Sigmoid colon (tissue), 7 donors: ENCODE measurements at regions of chr11 and their contacts with region 1.

Region 1: GRCh38 chr11:118145285-118146227 is 7.1 kb downstream of the SCN4B start:
- DNase-seq: peak; percentile 89
- H3K4me3 ChIP-seq: peak overlapping the region; percentile 44 to 66 (median 60)
- H3K27ac ChIP-seq: peak overlapping the region in 3 of 4 donors; percentile 39 to 58 (median 51)
- H3K4me1 ChIP-seq: peaks cover 0 to 9% (median 7%) of the 10 kb centered on the region in 4 donors
- H3K27me3 ChIP-seq: peaks cover 0 to 43% (median 6%) of the 10 kb centered on the region in 3 donors
- CTCF ChIP-seq: peak; percentile 90 to 97 (median 94)
- EP300 ChIP-seq: no peak
- POLR2A ChIP-seq: no peak

Region 2: DNA sequence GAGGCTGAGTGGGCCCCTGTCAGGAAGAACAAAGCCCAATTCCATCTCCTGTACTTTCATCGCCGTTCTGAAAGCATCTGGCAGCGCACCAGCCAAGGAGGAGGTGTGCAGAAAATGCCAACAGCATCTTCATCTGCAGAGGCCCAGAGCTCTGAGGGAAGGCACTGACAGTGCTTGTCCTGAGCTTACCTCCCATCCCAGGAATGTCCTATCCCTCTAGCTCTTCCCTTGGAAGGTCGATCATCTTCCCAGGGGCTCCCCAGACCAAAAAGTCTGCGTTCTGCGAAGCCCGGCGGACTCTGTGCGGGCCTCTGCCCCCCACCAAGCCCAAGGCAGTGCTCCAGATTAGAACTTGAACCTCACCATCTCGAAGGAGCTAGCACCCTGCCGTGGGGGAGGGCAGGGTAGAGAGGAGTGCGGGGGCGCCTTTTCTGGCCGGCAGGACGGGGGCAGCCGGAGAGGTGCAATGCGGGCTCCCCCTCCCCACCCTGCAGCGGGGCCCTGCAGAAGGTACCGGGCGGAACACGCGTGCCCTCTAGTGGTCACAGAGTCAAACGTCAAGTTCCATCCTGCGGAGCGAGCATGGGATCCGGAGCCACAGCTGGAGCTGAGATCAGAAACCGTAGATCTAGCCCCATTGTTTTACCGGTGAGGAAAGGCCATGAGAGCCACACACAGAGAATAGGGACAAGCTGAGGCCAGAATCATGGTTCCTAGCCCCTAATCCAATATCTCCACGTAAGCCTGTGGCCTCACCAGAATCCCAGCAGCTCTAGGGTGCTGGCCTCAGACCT is 25.9 kb after region 1 on chr11:
- intact Hi-C with region 1: loop called (anchors 1 kb)
- DNase-seq: peak; percentile 85
- H3K4me3 ChIP-seq: no peak overlapping the region
- H3K27ac ChIP-seq: no peak overlapping the region
- H3K4me1 ChIP-seq: peaks cover 0 to 23% (median 14%) of the 10 kb centered on the region in 4 donors
- H3K27me3 ChIP-seq: peaks cover 0 to 12% (median 0%) of the 10 kb centered on the region in 3 donors
- CTCF ChIP-seq: peak; percentile 72 to 91 (median 82)
- EP300 ChIP-seq: no peak
- POLR2A ChIP-seq: no peak

Region 3: DNA sequence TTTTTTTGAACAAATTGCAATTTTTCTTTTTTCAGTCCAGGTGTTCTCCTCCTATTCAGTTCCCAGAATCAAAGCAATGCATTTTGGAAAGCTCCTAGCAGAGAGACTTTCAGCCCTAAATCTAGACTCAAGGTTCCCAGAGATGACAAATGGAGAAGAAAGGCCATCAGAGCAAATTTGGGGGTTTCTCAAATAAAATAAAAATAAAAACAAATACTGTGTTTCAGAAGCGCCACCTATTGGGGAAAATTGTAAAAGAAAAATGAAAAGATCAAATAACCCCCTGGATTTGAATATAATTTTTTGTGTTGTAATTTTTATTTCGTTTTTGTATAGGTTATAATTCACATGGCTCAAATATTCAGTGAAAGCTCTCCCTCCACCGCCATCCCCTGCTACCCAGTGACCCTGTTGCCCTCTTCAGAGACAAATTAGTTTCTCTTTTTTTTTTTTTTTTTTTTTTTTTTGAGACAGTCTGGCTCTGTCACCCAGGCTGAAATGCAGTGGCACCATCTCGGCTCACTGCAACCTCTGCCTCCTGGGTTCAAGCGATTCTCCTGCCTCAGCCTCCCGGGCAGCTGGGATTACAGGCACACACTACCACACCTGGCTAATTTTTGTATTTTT is 207.6 kb after region 1 on chr11:
- intact Hi-C with region 1: loop called (anchors 5 kb)
- DNase-seq: no peak
- H3K4me3 ChIP-seq: no peak overlapping the region
- H3K27ac ChIP-seq: no peak overlapping the region
- H3K4me1 ChIP-seq: no peaks in the 10 kb centered on the region
- H3K27me3 ChIP-seq: peaks cover 0 to 25% (median 0%) of the 10 kb centered on the region in 3 donors
- CTCF ChIP-seq: peak; percentile 18 to 48 (median 28)
- EP300 ChIP-seq: no peak
- POLR2A ChIP-seq: no peak